Spleen (tissue), 13 donors: ENCODE measurements at regions of chr17 and their contacts with region 1.

Region 1: DNA sequence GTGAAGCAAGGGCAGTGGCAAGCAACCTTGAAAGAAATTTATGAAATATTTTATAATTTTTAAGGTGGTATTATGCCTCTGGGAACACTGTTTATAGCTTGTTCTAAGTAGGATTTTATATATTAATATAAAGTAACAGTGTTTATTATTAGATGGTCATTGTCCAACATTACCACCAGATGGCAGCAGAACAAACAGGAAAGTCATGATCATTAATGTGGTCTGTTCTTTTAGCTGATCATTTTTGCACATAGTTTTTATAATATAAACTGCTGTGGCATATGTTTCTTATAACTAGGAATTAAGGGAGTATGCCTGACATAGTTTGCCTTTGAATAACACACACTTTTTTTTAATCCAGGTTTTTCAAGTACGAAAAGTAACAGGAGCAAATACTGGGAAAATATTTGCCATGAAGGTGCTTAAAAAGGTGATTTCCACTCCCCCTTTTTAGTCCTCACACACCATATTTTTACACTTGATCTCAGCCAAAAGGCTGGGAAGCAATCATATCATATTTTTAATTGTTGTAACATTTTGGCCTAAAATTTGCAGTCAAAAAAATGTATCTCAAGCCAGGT is 21.4 kb downstream of the RPS6KB1 start:
- DNase-seq: no peak
- H3K4me3 ChIP-seq: no peak overlapping the region
- H3K27ac ChIP-seq: no peak overlapping the region
- H3K4me1 ChIP-seq: peaks cover 0 to 17% (median 0%) of the 10 kb centered on the region in 6 donors
- H3K27me3 ChIP-seq: no peaks in the 10 kb centered on the region
- CTCF ChIP-seq: peak; percentile 13 to 73 (median 57)
- POLR2A ChIP-seq: no peak

Region 2: DNA sequence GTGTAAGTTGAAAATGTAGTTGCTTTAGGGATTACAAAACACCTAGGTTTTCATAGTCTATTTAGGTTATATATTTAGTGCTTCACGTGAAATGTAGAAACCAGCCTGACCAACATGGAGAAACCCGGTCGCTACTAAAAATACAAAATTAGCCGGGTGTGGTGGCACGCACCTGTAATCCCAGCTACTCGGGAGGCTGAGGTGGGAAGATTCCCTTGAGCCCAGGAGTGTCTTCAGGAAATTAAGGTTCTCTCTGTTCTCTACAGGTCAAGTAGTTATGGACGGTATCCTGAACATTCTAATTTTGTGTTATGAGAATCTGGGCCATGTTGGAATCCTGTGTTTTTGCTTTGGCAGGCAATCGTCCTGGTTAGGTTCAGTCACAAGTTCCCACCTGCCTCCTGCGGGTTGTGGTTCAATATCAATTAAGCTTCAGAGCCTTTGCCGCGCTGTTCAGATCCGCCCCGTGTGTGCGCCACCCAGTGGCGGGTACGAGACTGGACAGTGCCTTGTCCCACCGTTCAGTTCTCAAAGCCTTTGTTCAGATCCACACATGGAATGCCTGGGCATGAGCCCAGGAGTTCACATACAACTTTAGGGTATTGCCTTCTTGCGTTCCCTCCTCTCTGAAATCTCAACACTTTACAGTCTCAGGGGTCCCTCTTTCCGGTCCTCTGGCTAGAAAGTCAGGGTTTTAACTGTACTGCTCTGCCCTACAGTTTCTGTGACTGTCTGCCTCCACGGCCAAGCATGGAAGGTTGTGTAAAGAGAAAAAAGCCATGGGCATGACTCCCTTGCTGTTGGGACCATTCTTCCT is 122.6 kb after region 1 on chr17:
- intact Hi-C with region 1: loop called (anchors 10 kb)
- DNase-seq: peak; percentile 90
- H3K4me3 ChIP-seq: peak overlapping the region in 1 of 8 donors; percentile 22
- H3K27ac ChIP-seq: no peak overlapping the region
- H3K4me1 ChIP-seq: peaks cover 0 to 9% (median 7%) of the 10 kb centered on the region in 6 donors
- H3K27me3 ChIP-seq: peaks cover 0 to 16% (median 0%) of the 10 kb centered on the region in 7 donors
- CTCF ChIP-seq: peak; percentile 28 to 89 (median 78)
- POLR2A ChIP-seq: no peak